ENCODE measurements at regions of chr12 and their contacts with region 1.

Region 1: DNA sequence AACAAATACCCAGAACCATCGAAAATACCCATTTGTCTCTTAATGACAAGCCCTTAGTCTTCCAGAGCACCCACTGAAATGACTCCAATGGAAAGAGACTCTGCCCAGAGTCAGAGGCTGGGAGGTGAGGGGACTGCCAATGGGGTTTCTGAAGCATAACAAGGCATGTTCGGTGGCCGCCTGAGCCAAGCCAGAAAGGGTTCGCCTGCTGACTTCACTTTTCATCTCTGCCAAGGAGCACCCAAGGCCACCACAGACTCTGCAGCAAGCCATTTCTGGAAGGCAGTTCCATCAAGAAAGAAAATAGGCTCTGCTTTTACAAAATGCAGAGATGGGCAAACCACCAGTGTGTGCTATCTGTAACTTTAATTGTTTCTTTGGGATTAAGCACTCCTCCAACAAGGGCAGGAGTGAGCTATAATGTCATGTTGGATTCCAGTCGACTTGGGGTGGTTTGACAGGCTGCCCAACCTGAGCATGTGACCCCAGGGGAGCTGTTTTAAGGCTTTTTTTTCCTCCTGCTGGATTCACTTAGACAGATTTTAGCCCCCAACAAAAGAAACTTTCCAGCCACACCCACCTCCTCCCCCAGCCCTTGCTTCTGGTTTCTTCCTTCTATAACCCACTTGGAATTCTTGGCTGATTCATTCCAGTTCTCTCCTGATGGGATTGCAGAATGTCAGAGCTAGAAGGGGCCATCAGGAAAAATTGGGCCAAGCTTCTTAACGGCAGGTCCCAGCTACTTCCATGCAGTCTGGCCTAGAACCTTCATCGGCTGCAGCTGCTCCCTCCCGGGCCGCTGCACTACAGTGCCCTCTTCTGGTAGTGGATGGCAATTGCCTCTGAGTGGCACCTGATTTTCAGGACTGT is 24.1 kb downstream of the CKAP4 start:
- DNase-seq: peak; percentile 84
- ATAC-seq: peak; percentile 95
- H3K4me3 Mint-ChIP-seq: no peak overlapping the region
- H3K27ac Mint-ChIP-seq: no peak overlapping the region
- H3K4me1 Mint-ChIP-seq: peaks cover 5% of the 10 kb centered on the region
- H3K27me3 Mint-ChIP-seq: no peaks in the 10 kb centered on the region
- CTCF ChIP-seq: peak; percentile 93

Region 2: DNA sequence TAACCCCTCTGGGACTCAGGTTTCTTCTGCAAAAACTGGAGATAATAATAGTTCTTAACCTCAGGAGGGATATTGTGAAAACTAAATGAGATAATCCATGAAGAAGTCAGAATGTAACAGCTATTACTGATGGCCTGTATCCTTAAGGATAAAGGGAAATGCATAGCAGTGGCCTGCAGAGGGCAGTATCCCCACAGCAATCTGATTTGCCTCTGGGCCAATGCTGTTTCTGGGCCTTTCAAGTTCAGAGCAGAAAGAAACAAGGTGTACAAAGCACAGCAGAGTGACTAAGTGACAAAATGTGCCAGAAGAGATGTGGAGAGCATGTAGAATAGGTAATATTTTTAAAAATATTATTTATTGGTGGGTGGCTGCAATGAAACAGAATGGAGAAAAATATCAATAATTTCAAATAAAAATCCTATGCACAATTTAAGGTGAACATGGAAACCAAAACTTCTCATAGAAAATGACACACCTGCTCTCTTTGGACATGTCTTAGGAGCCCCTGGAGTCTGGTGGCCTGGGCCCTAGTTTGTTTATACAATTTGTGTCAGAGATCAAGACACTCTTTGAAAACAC is 803.0 kb before region 1 on chr12:
- CTCF ChIA-PET with region 1: interaction called, 19 read pairs
- POLR2A ChIA-PET with region 1: no interaction called
- DNase-seq: peak; percentile 82
- ATAC-seq: peak; percentile 70
- H3K4me3 Mint-ChIP-seq: no peak overlapping the region
- H3K27ac Mint-ChIP-seq: no peak overlapping the region
- H3K4me1 Mint-ChIP-seq: no peaks in the 10 kb centered on the region
- H3K27me3 Mint-ChIP-seq: no peaks in the 10 kb centered on the region
- CTCF ChIP-seq: peak; percentile 85

Region 3: DNA sequence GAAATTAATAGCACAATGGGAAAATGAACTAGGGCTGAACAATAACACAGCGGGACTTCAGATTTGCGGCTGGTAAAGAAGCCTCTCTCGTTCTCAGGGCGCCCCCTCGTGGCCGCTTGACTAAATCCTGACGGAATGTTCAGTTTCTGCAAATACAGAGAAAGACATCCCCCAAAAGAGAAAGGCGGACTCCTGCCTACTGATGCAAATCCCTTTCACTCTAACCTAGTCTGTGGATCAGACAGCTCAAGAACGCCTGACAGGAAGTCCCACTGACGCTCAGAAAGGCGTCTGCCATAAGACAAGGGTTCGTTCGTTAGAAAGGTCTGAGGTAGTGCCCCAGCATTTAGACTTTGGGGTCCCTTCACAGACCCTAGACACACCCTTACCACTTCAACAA is 87.5 kb before region 1 on chr12:
- CTCF ChIA-PET with region 1: interaction called, 14 read pairs
- POLR2A ChIA-PET with region 1: interaction called, 3 read pairs
- DNase-seq: peak; percentile 92
- ATAC-seq: no peak
- H3K4me3 Mint-ChIP-seq: peak overlapping the region; percentile 92
- H3K27ac Mint-ChIP-seq: peak overlapping the region; percentile 76
- H3K4me1 Mint-ChIP-seq: peaks cover 74% of the 10 kb centered on the region
- H3K27me3 Mint-ChIP-seq: peaks cover 7% of the 10 kb centered on the region
- CTCF ChIP-seq: peak; percentile 79

Region 4: DNA sequence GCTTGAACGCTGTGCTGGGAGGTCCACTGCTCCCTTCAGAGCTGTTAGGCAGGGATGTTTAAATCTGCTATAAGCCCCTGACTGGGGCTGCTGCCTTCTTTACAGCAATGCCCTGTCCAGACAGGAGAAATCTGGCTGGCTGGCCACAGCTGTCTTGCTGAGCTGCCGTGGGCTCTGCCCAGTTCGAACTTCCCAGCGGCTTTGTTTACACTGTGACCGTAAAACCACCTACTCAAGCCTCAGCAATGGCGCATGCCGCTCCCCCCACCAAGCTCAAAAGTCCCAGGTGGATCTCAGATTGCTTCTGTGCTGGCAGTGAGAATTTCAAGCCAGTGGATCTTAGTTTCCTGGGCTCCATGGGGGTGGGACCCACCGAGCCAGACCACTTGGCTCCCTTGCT is 11.7 kb before region 1 on chr12:
- CTCF ChIA-PET with region 1: interaction called, 27 read pairs
- POLR2A ChIA-PET with region 1: no interaction called
- DNase-seq: no peak
- ATAC-seq: no peak
- H3K4me3 Mint-ChIP-seq: no peak overlapping the region
- H3K27ac Mint-ChIP-seq: no peak overlapping the region
- H3K4me1 Mint-ChIP-seq: no peaks in the 10 kb centered on the region
- H3K27me3 Mint-ChIP-seq: peaks cover 6% of the 10 kb centered on the region
- CTCF ChIP-seq: no peak

Region 5: DNA sequence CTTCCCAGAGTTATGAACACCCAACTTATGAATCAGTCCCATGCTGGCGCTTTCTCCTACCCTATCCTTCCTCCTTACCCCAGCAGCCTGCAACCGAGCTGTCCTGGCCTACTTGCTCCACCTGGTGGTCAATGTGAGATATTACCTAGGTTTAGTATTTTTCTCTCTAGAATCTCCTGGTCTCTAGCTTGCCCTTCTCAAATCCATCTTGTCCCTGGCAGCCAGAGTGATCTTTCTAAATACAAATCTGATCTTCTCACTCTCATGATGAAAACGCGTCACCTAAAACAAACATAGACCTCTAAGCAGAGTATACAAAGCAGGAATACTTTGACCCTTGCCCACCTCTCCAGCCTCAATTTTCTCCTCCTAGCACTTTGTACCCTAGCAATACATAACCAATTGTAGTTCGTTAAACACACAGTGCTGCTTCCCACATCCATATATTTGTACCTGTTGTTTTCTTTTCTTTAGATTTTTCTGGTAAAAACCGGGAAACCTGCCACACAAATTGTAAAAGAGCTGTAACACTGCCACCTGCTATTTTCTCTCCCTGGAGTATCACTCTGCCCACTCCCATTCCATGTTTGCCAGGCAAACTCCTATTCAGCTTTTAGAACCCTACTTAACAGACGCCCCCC is 58.9 kb after region 1 on chr12:
- CTCF ChIA-PET with region 1: interaction called, 73 read pairs
- POLR2A ChIA-PET with region 1: interaction called, 3 read pairs
- DNase-seq: peak; percentile 30
- ATAC-seq: peak; percentile 95
- H3K4me3 Mint-ChIP-seq: no peak overlapping the region
- H3K27ac Mint-ChIP-seq: no peak overlapping the region
- H3K4me1 Mint-ChIP-seq: no peaks in the 10 kb centered on the region
- H3K27me3 Mint-ChIP-seq: no peaks in the 10 kb centered on the region
- CTCF ChIP-seq: peak; percentile 72

Region 6: GRCh38 chr12:106345739-106346138 is 122.0 kb after region 1 on chr12:
- CTCF ChIA-PET with region 1: interaction called, 18 read pairs
- POLR2A ChIA-PET with region 1: no interaction called
- DNase-seq: peak; percentile 41
- ATAC-seq: peak; percentile 100
- H3K4me3 Mint-ChIP-seq: no peak overlapping the region
- H3K27ac Mint-ChIP-seq: no peak overlapping the region
- H3K4me1 Mint-ChIP-seq: 0 out of 2 replicates have a peak, but pooled peaks cover 3% of the 10 kb centered on the region
- H3K27me3 Mint-ChIP-seq: no peaks in the 10 kb centered on the region
- CTCF ChIP-seq: no peak

Region 7: GRCh38 chr12:106357549-106358395 is 134.1 kb after region 1 on chr12 and contains the start of gene POLR3B:
- CTCF ChIA-PET with region 1: interaction called, 16 read pairs
- POLR2A ChIA-PET with region 1: no interaction called
- DNase-seq: peak; percentile 95
- ATAC-seq: peak; percentile 91
- H3K4me3 Mint-ChIP-seq: peak within 1 kb of the TSS; percentile 86
- H3K27ac Mint-ChIP-seq: peak within 1 kb of the TSS; percentile 50
- H3K4me1 Mint-ChIP-seq: peaks cover 11% of the 10 kb centered on the region
- H3K27me3 Mint-ChIP-seq: no peaks in the 10 kb centered on the region; the same call in 1 of the 2 replicates
- CTCF ChIP-seq: peak; percentile 52
- total RNA-seq, gene POLR3B: 9.0 to 10.2 TPM (median 9.4 TPM) in 3 replicates